ENCODE measurements at regions of chr1 and their contacts with region 1.

Region 1: DNA sequence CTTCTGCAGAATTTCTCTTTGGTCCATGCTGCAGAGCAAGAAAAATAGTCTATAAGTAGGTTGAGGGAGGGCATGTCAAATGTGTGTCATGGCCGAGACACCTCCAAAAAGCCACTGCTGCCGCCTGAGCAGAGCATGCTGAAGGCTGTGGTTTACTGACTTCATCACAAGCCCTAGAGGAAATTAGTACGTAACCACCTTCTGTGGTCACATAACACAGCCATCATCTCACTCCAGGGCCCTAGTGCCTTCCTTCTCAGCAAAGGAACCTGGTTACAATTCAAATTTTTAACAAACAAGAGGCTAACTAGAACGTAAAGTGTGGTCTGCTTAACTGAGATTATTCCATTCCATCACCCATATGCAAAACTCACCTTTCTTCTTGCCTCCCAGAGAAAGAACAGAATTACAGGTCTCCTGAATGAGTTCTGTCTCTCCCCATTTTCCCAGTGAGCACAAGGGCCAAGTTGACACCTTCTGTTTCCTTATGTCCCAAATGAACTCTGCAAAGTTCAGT is at the start of gene PTPN22:
- DNase-seq: peak; percentile 90
- H3K4me3 Mint-ChIP-seq: peak within 1 kb of the TSS; percentile 85
- H3K27ac Mint-ChIP-seq: peak within 1 kb of the TSS; percentile 98
- H3K4me1 Mint-ChIP-seq: peaks cover 64% of the 10 kb centered on the region
- H3K27me3 Mint-ChIP-seq: no peaks in the 10 kb centered on the region
- total RNA-seq, gene PTPN22: 43.9 to 50.9 TPM

Region 2: GRCh38 chr1:112619520-112620376 is 1251.9 kb before region 1 on chr1 and contains the start of gene CAPZA1:
- CTCF ChIA-PET with region 1: no interaction called
- intact Hi-C with region 1: loop called (anchors 5 kb)
- DNase-seq: peak; percentile 95
- H3K4me3 Mint-ChIP-seq: peak within 1 kb of the TSS; percentile 99
- H3K27ac Mint-ChIP-seq: peak within 1 kb of the TSS; percentile 100
- H3K4me1 Mint-ChIP-seq: peaks cover 48% of the 10 kb centered on the region
- H3K27me3 Mint-ChIP-seq: no peaks in the 10 kb centered on the region
- total RNA-seq, gene CAPZA1: 231 to 242 TPM

Region 3: GRCh38 chr1:113389953-113390834 is 481.5 kb before region 1 on chr1 and contains the start of gene MAGI3:
- CTCF ChIA-PET with region 1: no interaction called
- intact Hi-C with region 1: loop called (anchors 2 kb)
- DNase-seq: peak; percentile 97
- H3K4me3 Mint-ChIP-seq: peak within 1 kb of the TSS; percentile 83
- H3K27ac Mint-ChIP-seq: peak within 1 kb of the TSS; percentile 48
- H3K4me1 Mint-ChIP-seq: peaks cover 20% of the 10 kb centered on the region
- H3K27me3 Mint-ChIP-seq: no peaks in the 10 kb centered on the region
- total RNA-seq, gene MAGI3: 5.9 to 6.4 TPM

Region 4: DNA sequence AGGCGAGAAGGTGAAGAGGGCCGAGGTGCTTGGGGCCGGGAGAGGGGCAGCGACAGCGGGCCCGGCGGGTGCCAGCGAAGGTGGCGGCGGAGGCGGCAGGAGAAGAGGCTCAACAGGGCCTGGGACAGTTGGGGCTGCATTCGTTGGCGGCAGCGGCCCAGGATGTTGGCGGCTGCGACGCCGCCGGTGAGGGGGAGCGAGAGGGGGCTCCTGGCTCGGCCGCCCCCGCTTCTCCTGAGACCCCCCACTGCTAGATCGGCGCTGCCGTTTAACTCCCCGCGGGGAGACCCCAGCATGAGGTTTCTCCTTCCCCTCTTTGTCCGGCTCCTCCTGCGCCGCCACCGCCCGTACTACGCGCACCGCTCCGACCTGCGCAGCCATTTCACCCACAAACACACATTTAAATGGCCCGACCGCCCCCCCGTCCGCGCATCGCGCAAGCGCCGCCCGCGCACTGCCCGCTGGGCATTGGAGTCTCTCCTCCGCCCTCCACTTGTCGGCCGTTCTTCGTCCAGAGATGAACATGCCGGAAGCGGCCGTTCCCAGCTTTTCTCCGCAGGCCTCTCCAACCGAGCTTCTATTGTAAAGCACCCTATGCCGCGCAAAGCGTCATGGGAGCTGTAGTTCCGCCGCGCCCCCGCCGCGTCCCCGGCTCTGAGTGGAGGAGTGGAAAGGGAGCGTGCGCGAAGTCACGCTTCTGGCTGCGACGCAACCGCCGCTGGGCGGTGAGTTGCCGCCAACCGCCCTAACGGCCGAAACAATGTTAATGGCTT is 59.6 kb before region 1 on chr1 and contains the start of gene RSBN1:
- CTCF ChIA-PET with region 1: no interaction called
- intact Hi-C with region 1: loop called (anchors 1 kb)
- DNase-seq: peak; percentile 99
- H3K4me3 Mint-ChIP-seq: peak within 1 kb of the TSS; percentile 98
- H3K27ac Mint-ChIP-seq: peak within 1 kb of the TSS; percentile 94
- H3K4me1 Mint-ChIP-seq: peaks cover 31% of the 10 kb centered on the region
- H3K27me3 Mint-ChIP-seq: no peaks in the 10 kb centered on the region
- total RNA-seq, gene RSBN1: 13.6 to 14.3 TPM

Region 5: GRCh38 chr1:113859478-113860175 is 12.0 kb before region 1 on chr1:
- CTCF ChIA-PET with region 1: interaction called, 10 read pairs
- intact Hi-C with region 1: loop called (anchors 1 kb)
- DNase-seq: no peak
- H3K4me3 Mint-ChIP-seq: no peak overlapping the region
- H3K27ac Mint-ChIP-seq: no peak overlapping the region
- H3K4me1 Mint-ChIP-seq: peaks cover 37% of the 10 kb centered on the region
- H3K27me3 Mint-ChIP-seq: no peaks in the 10 kb centered on the region

Region 6: DNA sequence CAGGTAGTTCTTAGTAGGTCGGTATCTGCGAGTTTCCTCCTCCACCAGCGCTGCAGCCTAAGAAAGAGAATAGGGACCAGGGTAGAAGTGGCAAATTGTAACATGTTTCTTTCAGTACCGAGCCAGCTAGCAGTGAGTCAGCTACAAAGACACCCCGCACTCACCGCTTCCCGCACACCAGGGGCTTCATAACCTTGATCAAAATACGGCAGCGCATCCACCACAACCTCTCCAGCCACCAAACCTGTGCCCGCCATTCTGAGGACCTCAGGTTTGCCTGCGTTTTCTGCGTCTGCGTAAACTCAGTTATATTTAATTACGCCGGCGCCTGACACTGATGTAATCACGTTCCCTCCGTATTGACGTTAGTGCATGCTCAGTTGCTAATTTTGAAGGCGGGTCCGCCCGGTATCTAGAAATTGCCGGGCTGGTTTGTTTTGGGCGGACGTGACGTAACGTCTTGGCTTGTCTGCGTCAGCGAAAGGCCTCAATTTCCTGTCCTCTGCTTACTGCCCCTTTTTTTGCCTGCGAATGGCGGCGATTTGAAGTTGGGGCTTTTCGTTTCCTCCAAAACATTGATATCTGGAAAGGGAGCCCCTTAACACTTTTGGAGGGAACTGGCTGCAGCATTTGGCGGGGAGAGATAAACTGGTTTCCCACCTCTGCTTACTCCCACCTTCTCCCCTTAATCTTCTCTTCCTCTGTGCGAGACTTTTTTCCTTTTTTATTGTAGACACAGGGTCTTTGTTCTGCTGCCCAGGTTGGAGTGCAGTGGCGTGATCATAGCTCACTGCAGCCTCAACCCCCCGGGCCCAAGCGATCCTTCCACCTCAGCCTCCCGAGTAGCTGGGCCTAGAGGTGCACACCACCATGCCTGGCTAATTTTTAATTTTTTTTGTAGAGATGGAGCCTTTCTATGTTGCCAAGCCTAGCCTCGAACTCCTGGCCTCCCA is 710.0 kb after region 1 on chr1 and contains the start of gene BCAS2:
- CTCF ChIA-PET with region 1: no interaction called
- intact Hi-C with region 1: loop called (anchors 5 kb)
- DNase-seq: peak; percentile 99
- H3K4me3 Mint-ChIP-seq: peak within 1 kb of the TSS; percentile 99
- H3K27ac Mint-ChIP-seq: peak within 1 kb of the TSS; percentile 96
- H3K4me1 Mint-ChIP-seq: peaks cover 32% of the 10 kb centered on the region
- H3K27me3 Mint-ChIP-seq: no peaks in the 10 kb centered on the region
- total RNA-seq, gene BCAS2: 46.5 to 48.0 TPM

Measured in activated naive CD4-positive, alpha-beta T cell treated with anti-CD3 and anti-CD28 coated beads for 36 hours (primary cell).